Dorsolateral prefrontal cortex (tissue), 120 donors: ENCODE measurements at regions of chr5 and their contacts with region 1.

Region 1: DNA sequence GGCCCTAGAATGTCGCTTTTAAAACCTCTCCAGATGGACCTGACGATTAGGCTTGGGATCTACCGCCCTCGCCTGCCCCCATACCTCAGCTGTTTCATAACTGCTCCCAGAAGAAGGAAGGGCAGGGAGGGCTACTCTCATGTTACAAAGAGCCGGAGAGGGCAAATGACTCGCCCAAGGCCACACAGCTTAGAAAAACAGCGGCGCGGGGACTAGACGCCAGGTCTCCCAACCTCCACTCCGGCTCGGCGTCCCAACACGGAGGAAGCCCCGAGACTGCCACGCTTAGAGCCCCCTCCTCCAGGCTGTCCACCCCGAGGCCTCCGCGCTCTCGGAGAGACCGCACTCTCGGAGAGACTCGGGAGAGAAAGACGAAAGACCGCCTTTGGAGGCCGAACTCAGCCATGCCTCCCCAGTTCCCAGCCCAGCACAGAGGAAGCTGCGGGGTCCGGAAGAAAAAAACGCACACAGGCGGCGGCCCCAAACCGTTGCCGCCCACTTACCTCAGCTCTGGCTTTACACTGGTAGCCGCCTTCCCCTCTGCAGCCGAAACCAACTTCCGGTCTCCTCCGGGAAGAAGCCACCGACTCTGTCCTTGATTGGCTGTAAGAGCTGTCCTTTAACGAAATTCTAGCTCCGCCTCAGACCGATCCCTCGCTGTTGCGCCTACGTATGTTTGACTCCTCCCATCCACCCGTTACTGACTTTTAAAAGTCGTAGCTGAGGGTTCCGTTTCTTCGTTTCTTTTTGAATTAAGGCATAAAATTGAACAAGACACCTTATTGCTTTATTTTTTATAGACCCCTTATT is at the start of gene MED7:
- DNase-seq: peak; percentile 71 to 96 (median 94)
- H3K4me3 ChIP-seq: peak within 1 kb of the TSS; percentile 63 to 100 (median 94)
- H3K27ac ChIP-seq: peak within 1 kb of the TSS; percentile 52 to 98 (median 89)
- H3K27me3 ChIP-seq: no peaks in the 10 kb centered on the region
- CTCF ChIP-seq: peak in 14 of 56 donors; percentile 4 to 44 (median 28)
- total RNA-seq, gene MED7: 10.1 to 23.5 (median 15.7) TPM

Region 2: DNA sequence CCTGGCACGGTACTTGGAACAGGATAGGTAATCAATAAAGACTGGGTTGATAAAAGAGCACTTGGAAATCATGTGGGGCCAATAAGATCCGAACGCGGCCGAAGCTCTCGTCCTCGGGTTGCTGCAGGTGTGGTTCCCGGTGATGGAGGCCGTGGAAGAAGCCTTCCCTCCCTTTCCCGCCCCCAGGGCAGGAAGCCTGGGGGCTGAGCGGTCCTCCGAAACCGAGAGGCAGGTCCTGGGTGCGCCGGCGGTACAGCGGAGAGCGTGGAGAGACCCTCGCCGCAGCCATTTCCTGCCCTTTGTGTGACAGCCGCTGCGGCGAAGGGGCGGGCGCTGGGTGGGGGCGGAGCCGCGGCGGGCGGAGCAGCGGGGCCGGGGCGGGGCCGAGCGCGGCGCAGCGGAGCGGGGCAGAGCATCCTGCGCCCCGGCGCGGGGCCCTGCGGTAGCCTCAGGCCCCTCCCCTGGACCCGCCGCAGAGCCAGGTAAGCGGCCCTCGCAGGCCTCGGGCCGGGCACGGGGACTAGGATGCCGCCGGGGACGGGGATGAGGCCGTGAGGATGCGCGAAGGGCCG is 123.3 kb after region 1 on chr5 and contains the start of gene CYFIP2:
- intact Hi-C with region 1: loop called (anchors 10 kb)
- DNase-seq: peak in 7 of 10 donors; percentile 26 to 77 (median 63)
- H3K4me3 ChIP-seq: peak within 1 kb of the TSS; percentile 62 to 97 (median 83)
- H3K27ac ChIP-seq: peak within 1 kb of the TSS in 57 of 59 donors; percentile 26 to 90 (median 78)
- H3K27me3 ChIP-seq: no peaks in the 10 kb centered on the region
- CTCF ChIP-seq: peak in 8 of 56 donors; percentile 3 to 46 (median 15)
- total RNA-seq, gene CYFIP2: 150 to 487 (median 373) TPM

Region 3: DNA sequence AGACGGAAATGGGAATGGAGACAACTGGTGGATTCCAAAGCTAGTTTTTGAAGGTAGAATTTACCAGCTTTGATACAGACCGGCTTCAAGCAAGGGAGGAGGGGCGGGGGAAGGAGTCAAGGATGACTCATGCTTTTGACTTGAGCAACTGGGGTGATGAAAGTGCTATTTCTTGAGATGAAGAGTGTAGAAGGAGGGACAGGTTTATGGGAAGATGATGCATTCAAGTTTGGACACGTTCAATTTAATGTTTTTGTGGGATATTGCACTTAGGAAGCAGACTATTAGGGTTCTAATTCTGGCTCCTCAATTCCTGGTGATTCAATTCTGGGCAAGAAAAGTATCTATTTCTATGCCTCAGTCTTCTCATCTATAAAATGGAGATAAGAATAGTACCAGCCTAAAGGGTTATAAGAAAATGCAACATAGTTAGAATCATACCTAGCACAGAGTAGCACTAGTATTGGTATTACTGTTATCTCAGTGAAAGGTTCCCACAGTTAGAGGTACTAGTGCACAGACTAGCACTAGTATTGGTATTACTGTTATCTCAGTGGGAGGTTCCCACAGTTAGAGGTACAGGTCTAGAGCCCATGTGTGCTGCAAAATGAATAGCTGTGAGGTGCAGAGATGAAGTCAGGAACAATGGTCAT is 322.1 kb after region 1 on chr5:
- intact Hi-C with region 1: loop called in 1 of 2 experiments (anchors 10 kb)
- DNase-seq: no peak
- H3K4me3 ChIP-seq: peak overlapping the region in 1 of 59 donors; percentile 1
- H3K27ac ChIP-seq: peak overlapping the region in 34 of 59 donors; percentile 2 to 99 (median 82)
- H3K27me3 ChIP-seq: peaks cover 0 to 16% (median 0%) of the 10 kb centered on the region in 45 donors
- CTCF ChIP-seq: no peak

Region 4: GRCh38 chr5:157731272-157732129 is 589.0 kb after region 1 on chr5 and contains the start of gene THG1L:
- intact Hi-C with region 1: loop called in 1 of 2 experiments (anchors 2 kb)
- DNase-seq: peak; percentile 100
- H3K4me3 ChIP-seq: peak within 1 kb of the TSS; percentile 61 to 93 (median 78)
- H3K27ac ChIP-seq: peak within 1 kb of the TSS; percentile 68 to 99 (median 94)
- H3K27me3 ChIP-seq: no peaks in the 10 kb centered on the region
- CTCF ChIP-seq: peak in 31 of 56 donors; percentile 0 to 56 (median 23)
- total RNA-seq, gene THG1L: 2.4 to 8.6 (median 5.0) TPM